ENCODE measurements at regions of chr11 and their contacts with region 1.

Region 1: GRCh38 chr11:98194611-98195010 is 826.1 kb upstream of the CNTN5 start:
- DNase-seq: peak; percentile 14
- ATAC-seq: no peak
- H3K4me3 ChIP-seq: no peak overlapping the region
- H3K27ac ChIP-seq: no peak overlapping the region
- H3K4me1 ChIP-seq: no peaks in the 10 kb centered on the region
- H3K27me3 ChIP-seq: no peaks in the 10 kb centered on the region
- CTCF ChIP-seq: no peak

Region 2: DNA sequence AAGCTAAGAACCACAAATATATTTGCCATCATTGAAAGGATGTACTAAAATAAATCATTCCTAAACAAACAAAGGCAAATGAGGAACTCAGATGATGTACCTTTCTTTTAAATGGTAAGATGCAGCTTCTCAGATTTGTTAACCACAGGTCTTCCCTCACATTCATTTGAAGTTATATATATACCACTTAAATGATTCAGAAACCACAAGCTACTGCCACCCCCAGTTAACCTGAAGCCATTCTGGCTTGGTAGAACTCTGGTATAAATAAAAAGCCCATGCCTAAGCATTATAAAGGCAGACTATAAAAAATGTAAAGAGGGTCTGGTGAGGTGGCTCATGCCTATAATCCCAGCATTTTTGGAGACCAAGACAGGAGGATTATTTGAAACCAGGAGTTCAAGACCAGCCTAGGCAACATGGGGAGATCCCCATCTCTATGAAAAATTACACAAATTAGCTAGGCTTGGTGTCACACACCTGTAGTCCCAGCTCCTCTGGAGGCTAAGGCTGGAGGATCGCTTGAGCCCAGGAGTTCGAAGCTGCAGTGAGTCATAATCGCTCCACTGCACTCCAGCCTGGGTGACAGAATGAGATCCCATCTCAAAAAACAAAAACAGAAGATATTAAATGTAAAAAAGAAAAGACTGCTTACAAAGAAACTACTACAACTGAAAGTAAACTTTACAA is 619.5 kb before region 1 on chr11:
- CTCF ChIA-PET with region 1: interaction called, 11 read pairs
- POLR2A ChIA-PET with region 1: no interaction called
- intact Hi-C with region 1: no loop called
- DNase-seq: peak; percentile 31
- ATAC-seq: no peak
- H3K4me3 ChIP-seq: no peak overlapping the region
- H3K27ac ChIP-seq: no peak overlapping the region
- H3K4me1 ChIP-seq: no peaks in the 10 kb centered on the region
- H3K27me3 ChIP-seq: no peaks in the 10 kb centered on the region
- CTCF ChIP-seq: no peak

Region 3: GRCh38 chr11:98153752-98154151 is 40.9 kb before region 1 on chr11:
- CTCF ChIA-PET with region 1: no interaction called
- POLR2A ChIA-PET with region 1: no interaction called
- intact Hi-C with region 1: no loop called
- DNase-seq: no peak
- ATAC-seq: no peak
- H3K4me3 ChIP-seq: no peak overlapping the region
- H3K27ac ChIP-seq: no peak overlapping the region
- H3K4me1 ChIP-seq: no peaks in the 10 kb centered on the region
- H3K27me3 ChIP-seq: no peaks in the 10 kb centered on the region
- CTCF ChIP-seq: no peak